GM18951 (cell line): ENCODE measurements at regions of chr5 and their contacts with region 1.

Region 1: GRCh38 chr5:146052780-146053179 is 52.6 kb downstream of the PLAC8L1 start:
- POLR2A ChIP-seq: no peak

Region 2: DNA sequence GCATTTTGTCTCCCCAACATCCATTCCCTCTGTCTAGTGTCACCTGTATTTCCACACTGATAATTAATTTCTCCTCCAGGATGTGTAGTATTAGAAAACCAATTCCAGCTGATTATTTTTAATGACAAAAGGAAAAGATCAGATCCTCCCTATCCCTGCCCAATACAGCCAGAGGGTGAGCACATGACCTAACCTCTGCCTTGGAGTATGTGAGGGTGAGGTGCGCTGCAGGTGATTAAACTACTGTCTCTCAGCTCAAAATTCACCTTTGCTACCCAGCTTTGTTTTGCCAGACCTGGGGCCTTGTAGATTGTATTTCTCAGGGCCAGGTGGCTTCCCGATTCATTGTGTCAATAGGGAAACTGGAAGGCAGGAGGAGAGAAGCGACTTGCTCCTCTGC is 619.7 kb before region 1 on chr5:
- in situ Hi-C with region 1: no loop called
- POLR2A ChIP-seq: no peak

Region 3: GRCh38 chr5:145681686-145682085 is 371.1 kb before region 1 on chr5:
- in situ Hi-C with region 1: loop called (anchors 10 kb)
- POLR2A ChIP-seq: no peak

Region 4: DNA sequence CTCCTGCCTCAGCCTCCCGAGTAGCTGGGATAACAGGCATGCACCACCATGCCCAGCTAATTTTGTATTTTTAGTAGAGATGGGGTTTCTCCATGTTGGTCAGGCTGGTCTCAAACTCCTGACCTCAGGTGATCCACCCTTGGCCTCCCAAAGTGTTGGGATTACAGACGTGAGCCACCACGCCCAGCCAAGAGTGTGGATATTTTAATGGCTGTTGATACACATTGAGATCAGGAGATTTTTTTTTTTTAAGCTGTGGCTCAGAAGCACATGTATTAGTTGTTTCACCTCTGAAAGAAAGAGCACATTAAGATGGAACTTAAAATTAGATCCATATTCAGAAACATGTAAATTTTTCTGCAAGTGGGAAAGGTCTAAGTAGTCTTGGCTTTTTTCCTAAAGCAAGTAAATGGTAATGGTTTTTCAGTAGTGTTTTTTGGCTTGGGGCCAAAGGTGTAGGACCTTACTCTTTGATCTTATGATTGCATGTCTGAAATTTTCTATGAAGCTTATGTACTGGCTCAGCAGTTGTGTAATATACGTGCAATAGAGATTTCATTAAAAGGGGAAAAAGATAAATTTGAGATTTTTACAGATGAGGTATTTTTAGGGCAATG is 160.5 kb after region 1 on chr5:
- in situ Hi-C with region 1: no loop called
- POLR2A ChIP-seq: no peak